Heart right ventricle (tissue), 16 donors: ENCODE measurements at regions of chr6 and their contacts with region 1.

Region 1: GRCh38 chr6:167485186-167485978 is 160.5 kb downstream of the TTLL2 start:
- DNase-seq: peak in 1 of 2 donors; percentile 65
- ATAC-seq: peak in 7 of 8 donors; percentile 77 to 87 (median 84)
- H3K4me3 ChIP-seq: no peak overlapping the region
- H3K27ac ChIP-seq: no peak overlapping the region
- H3K4me1 ChIP-seq: peaks cover 0 to 19% (median 5%) of the 10 kb centered on the region in 9 donors
- H3K27me3 ChIP-seq: no peaks in the 10 kb centered on the region
- CTCF ChIP-seq: peak in 8 of 9 donors; percentile 50 to 80 (median 68)

Region 2: GRCh38 chr6:166237617-166238016 is 1247.8 kb before region 1 on chr6:
- intact Hi-C with region 1: no loop called
- DNase-seq: no peak
- ATAC-seq: no peak
- H3K4me3 ChIP-seq: no peak overlapping the region
- H3K27ac ChIP-seq: no peak overlapping the region
- H3K4me1 ChIP-seq: no peaks in the 10 kb centered on the region
- H3K27me3 ChIP-seq: peaks cover 0 to 77% (median 46%) of the 10 kb centered on the region in 7 donors
- CTCF ChIP-seq: no peak

Region 3: DNA sequence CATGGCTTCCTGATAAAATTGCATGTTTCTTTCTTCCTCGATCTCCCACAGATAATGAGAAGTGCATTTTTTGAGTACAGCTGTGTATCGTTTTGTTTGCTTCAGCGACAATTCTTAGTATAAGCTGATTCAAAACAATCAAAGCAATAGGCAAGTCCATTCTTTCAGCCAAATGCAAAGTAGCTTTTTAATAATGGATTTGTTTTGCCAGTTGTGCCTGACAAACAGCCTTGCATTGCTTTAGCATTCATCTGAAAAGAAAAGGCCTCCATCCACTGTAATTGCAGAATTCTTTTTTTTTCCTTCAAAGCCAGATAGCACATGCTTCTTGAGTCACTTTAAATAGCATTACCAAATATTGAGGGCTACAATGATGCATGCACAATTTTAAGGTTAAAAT is 128.5 kb before region 1 on chr6:
- intact Hi-C with region 1: no loop called
- DNase-seq: no peak
- ATAC-seq: no peak
- H3K4me3 ChIP-seq: no peak overlapping the region
- H3K27ac ChIP-seq: no peak overlapping the region
- H3K4me1 ChIP-seq: peaks cover 0 to 1% (median 0%) of the 10 kb centered on the region in 9 donors
- H3K27me3 ChIP-seq: peaks cover 0 to 35% (median 26%) of the 10 kb centered on the region in 7 donors
- CTCF ChIP-seq: no peak

Region 4: DNA sequence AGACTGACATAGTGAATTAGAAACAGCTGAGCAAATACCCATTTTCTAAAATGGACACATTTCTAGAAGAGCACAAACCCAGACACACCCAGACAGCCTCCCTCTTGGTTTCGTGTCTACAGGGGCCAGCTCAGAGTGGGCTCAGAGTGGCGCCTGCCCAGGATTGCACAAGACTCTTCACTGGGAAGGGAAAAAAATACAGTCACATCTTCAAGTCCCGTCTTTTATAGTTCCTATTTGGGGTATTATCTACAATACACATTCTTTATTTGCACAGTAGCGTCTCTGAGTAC is 95.2 kb after region 1 on chr6:
- intact Hi-C with region 1: no loop called
- DNase-seq: no peak
- ATAC-seq: peak in 5 of 8 donors; percentile 33 to 62 (median 52)
- H3K4me3 ChIP-seq: no peak overlapping the region
- H3K27ac ChIP-seq: peak overlapping the region in 1 of 10 donors; percentile 43
- H3K4me1 ChIP-seq: peaks cover 0 to 7% (median 0%) of the 10 kb centered on the region in 9 donors
- H3K27me3 ChIP-seq: no peaks in the 10 kb centered on the region
- CTCF ChIP-seq: no peak

Region 5: DNA sequence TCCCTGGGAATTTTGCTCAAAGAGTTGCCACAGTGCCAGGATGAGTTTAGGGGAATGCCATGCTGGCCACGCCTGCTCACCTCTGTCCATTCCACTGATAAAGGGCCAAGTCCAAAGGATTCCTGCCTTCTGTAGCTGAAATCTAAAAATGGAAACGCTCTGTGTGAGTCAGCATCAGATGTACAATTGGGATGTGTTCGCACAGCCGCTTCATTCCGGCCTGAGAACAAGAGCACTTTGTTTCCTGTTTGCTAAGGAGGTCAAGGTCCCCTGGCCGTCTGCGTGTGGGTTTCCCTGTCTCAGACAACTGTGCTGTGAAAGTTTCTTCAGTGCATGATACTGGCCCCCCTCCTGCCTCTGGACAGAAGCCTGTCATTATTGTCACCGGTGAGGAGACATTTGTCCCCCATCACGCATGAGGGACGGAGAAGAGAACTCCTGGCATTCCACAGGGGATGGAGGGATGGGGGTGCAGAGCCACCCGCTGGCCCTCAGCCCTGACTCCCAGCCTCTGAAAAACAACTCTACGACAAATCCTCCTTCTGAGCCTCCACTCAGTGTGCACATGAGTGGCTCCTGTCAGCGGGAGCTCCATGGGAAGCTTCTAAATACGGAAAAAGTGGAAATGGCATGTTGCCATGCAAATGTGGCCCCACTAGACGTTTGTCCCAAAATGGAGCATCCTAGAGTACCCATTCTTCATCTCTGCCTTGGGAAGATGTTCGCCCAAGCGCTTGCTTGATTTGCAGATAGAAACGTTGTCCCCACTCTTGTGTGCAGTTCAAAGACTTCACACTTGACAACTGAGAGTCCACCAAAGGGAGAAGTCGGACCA is 197.9 kb after region 1 on chr6:
- intact Hi-C with region 1: loop called in 1 of 10 experiments (anchors 5 kb)
- DNase-seq: peak; percentile 42 to 81
- ATAC-seq: peak; percentile 79 to 92 (median 90)
- H3K4me3 ChIP-seq: no peak overlapping the region
- H3K27ac ChIP-seq: peak overlapping the region; percentile 63 to 88 (median 77)
- H3K4me1 ChIP-seq: peaks cover 16 to 63% (median 44%) of the 10 kb centered on the region in 9 donors
- H3K27me3 ChIP-seq: peaks cover 0 to 18% (median 0%) of the 10 kb centered on the region in 7 donors
- CTCF ChIP-seq: no peak

Region 6: GRCh38 chr6:167826230-167826895 is 341.0 kb after region 1 on chr6:
- intact Hi-C with region 1: loop called in 2 of 10 experiments (anchors 10 kb)
- DNase-seq: peak; percentile 75 to 77
- ATAC-seq: peak; percentile 91 to 95 (median 93)
- H3K4me3 ChIP-seq: peak overlapping the region; percentile 68 to 93 (median 76)
- H3K27ac ChIP-seq: peak overlapping the region in 7 of 10 donors; percentile 14 to 67 (median 54)
- H3K4me1 ChIP-seq: peaks cover 4 to 47% (median 42%) of the 10 kb centered on the region in 9 donors
- H3K27me3 ChIP-seq: peaks cover 0 to 43% (median 0%) of the 10 kb centered on the region in 7 donors
- CTCF ChIP-seq: peak; percentile 23 to 60 (median 41)

Region 7: DNA sequence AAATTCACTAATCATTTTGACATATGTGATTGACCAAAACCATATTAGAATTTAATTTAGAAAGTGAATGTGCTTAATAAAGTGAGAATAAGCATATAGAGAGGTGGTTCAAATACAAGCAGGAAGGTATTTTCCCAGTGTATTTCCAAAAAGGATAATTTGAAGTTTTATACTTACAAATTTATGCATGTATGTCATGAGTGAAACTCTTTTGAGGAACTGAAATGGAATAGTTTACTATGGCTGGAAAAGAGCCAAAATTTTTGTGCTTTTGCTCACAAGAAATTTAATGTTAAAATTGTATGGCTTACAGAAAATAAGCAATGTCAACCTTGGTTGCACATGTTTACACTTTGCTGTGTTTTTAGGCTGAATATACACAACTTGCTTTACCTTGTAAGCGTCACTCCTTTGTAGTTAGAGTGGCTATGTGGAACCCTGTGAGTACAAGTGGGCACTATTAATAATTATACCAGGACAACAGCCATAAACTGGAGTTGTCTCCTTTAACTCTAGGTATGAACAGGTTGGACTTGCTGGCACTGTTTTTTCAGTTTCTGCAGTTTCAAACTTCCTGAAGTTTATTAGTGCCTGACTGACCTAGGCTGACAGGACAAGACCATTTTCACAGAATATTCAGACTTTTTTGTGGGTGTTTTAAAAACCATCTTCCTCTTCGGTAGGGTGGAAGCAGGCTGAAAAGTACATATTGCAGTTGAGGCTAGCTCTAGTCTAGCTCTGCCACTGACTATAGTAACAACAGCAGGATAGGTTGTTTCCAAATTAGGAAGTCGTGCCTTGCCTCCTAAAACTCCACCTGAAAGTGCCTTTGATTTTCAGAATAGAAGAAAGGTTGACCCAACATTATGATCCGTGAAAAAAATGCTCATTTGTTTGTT is 347.4 kb after region 1 on chr6:
- intact Hi-C with region 1: loop called in 2 of 10 experiments (anchors 10 kb)
- DNase-seq: no peak
- ATAC-seq: peak in 5 of 8 donors; percentile 11 to 57 (median 52)
- H3K4me3 ChIP-seq: no peak overlapping the region
- H3K27ac ChIP-seq: peak overlapping the region in 2 of 10 donors; percentile 11 to 14
- H3K4me1 ChIP-seq: peaks cover 0 to 77% (median 53%) of the 10 kb centered on the region in 9 donors
- H3K27me3 ChIP-seq: peaks cover 0 to 24% (median 0%) of the 10 kb centered on the region in 7 donors
- CTCF ChIP-seq: no peak